ENCODE measurements at regions of chr16 and their contacts with region 1.

Region 1: GRCh38 chr16:87492721-87493607 is at the start of gene ZCCHC14:
- DNase-seq: peak; percentile 98
- H3K4me3 Mint-ChIP-seq: peak within 1 kb of the TSS; percentile 88
- H3K27ac Mint-ChIP-seq: peak within 1 kb of the TSS; percentile 76
- H3K4me1 Mint-ChIP-seq: peaks cover 26% of the 10 kb centered on the region
- H3K27me3 Mint-ChIP-seq: no peaks in the 10 kb centered on the region
- CTCF ChIP-seq: no peak
- total RNA-seq, gene ZCCHC14: 23.3 and 28.2 TPM in 2 replicates

Region 2: DNA sequence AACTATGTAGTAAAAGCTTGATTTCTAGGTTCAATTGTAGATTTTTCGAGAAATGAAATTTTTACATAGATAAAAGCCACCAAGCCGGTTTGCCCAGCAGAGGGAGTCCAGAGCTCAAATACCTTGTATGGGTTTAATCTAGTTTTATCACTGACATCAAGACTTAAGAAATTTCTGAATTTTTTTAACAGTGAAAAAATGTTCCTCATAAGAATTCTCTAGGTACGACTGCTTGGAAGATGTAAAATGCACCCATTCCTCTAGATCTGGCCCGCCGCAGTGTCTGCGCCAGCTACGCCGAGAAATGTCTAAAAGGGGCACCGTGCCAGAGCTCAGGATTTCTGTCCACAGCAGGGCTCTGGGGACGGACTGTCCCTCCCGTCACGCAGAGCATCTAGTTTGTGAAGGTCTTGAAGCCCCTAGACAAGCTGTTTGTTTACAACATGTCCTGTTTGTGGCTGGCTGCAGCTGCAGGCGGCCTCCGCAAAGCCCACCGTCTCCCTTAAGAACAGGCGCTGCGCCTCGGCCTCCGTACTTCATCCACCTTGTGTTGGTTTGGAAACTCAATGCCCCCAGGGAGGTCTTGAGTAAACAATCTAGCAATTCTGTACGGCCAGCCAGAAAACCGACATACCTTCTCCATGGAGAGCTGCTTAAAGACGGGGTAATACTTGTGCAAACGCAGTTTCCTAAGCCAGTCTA is 76.0 kb before region 1 on chr16:
- CTCF ChIA-PET with region 1: no interaction called
- POLR2A ChIA-PET with region 1: no interaction called
- intact Hi-C with region 1: loop called (anchors 2 kb)
- DNase-seq: peak; percentile 56
- H3K4me3 Mint-ChIP-seq: no peak overlapping the region
- H3K27ac Mint-ChIP-seq: no peak overlapping the region
- H3K4me1 Mint-ChIP-seq: no peaks in the 10 kb centered on the region
- H3K27me3 Mint-ChIP-seq: no peaks in the 10 kb centered on the region
- CTCF ChIP-seq: peak; percentile 52

Region 3: DNA sequence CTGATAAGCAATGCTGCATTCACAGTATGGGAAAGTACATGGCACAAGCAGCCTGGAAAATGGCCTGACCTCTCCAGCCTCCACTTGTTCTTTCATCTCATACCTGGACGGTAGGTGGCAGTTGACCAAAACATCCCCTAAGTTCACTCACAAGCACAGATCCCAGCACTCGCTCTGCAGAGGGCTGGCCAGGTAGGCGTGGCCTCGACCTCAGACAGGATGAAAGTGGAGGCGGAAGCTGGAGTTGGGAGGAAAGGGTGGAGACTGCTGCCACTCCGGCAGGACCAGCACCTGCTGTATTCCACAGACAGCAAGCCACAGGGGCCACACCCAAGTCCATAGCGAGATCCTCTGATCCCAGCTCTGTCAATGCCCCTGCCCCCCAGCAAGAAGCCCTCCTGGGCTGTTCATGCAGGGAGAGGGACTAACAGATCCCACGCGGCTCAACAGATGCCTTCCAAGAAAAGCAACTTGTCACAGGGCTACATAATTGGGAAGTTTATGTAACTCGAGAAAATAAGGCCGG is 31.4 kb before region 1 on chr16:
- CTCF ChIA-PET with region 1: interaction called, 22 read pairs
- POLR2A ChIA-PET with region 1: interaction called, 144 read pairs
- intact Hi-C with region 1: loop called (anchors 1 kb)
- DNase-seq: peak; percentile 95
- H3K4me3 Mint-ChIP-seq: peak overlapping the region; percentile 57
- H3K27ac Mint-ChIP-seq: no peak overlapping the region
- H3K4me1 Mint-ChIP-seq: peaks cover 31% of the 10 kb centered on the region
- H3K27me3 Mint-ChIP-seq: no peaks in the 10 kb centered on the region
- CTCF ChIP-seq: peak; percentile 37

Region 4: DNA sequence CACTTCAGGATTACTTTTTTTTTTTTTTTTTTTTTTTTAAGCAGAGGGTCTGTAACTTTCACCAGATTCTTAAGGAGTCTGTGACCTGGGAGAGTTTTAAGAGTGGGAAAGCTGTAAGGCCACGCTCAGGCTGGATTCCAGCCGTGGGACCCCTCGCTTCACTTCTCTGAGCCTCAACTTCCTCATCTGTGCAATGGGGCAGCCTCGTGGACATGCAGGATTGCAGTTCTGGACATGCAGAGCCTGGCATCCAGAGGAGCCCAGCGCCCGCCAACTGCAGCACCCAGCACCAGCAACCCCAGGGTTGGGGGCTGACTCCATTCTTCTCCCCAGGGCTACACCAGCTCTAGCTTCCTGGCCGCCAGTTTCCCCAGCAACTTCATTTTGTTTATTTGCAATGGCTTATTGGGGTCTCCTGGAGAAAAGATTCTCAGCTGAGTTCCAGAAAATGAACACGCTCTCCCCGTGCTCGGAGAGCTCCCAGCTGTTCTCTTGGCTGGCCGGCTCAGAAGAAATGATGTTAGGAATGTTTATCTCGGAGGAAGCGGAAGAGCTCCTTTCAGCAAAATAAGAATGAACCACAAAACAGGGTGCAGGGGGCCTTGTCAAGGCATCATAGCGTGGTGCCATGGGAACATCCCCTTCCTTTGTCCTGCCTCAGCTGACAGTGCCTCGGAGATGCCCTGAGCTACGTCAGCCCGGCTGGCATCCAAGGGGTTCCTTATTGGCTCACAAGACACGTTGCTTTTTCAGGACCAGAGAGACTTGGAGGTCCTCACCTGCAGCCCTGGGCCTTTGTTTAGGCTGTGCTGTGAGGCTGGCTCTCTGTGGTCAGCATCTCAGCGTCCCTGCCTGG is 22.7 kb after region 1 on chr16:
- CTCF ChIA-PET with region 1: no interaction called
- POLR2A ChIA-PET with region 1: interaction called, 24 read pairs
- intact Hi-C with region 1: loop called (anchors 1 kb)
- DNase-seq: no peak
- H3K4me3 Mint-ChIP-seq: no peak overlapping the region
- H3K27ac Mint-ChIP-seq: no peak overlapping the region
- H3K4me1 Mint-ChIP-seq: peaks cover 28% of the 10 kb centered on the region
- H3K27me3 Mint-ChIP-seq: no peaks in the 10 kb centered on the region
- CTCF ChIP-seq: no peak

Region 5: GRCh38 chr16:87550496-87550961 is 57.6 kb after region 1 on chr16:
- CTCF ChIA-PET with region 1: interaction called, 5 read pairs
- POLR2A ChIA-PET with region 1: no interaction called
- intact Hi-C with region 1: loop called (anchors 10 kb)
- DNase-seq: peak; percentile 42
- H3K4me3 Mint-ChIP-seq: no peak overlapping the region
- H3K27ac Mint-ChIP-seq: no peak overlapping the region
- H3K4me1 Mint-ChIP-seq: peaks cover 7% of the 10 kb centered on the region
- H3K27me3 Mint-ChIP-seq: peaks cover 21% of the 10 kb centered on the region
- CTCF ChIP-seq: peak; percentile 98

Measured in MCF 10A (cell line).